CD4-positive, alpha-beta memory T cell (primary cell): ENCODE measurements at regions of chr12 and their contacts with region 1.

Region 1: DNA sequence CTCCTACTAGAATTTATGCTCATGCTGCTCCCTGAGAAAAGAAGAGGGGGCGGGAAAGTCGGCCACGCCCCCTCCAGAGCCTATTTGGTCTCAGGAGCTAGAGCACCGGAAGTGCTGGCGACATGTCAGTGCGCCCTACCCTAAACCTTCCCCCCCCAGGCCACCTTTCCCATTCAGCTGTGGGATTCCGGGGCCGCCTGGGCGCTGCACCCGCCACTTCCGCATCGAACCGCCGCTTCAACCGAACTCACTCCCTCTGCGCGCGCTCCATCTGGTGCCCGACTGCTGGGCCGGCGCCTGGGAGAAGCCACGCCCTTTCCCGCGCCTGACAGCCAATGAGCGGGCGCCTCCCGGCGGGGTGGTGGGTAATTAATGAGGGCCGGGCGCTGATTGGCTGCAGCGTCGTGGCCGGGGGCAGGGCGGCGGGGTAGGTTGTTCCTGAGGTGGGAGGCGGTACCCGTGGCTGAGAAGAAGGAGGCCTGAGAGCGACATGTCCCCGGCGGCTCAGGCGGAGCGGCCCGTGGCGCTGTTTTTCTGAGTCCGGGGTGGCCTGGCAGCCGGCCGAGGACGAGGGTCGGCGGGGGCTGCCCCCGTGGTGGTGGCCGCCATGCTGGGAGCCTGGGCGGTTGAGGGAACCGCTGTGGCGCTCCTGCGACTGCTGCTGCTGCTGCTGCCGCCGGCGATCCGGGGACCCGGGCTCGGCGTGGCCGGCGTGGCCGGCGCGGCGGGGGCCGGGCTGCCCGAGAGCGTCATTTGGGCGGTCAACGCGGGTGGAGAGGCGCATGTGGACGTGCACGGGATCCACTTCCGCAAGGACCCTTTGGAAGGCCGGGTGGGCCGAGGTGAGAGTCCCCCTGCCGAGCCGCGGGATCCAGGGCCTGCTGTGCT is at the start of gene MLEC:
- DNase-seq: peak; percentile 99 to 100 (median 100)
- H3K4me3 ChIP-seq: peak within 1 kb of the TSS; percentile 85 to 98
- H3K4me3 Mint-ChIP-seq: peak within 1 kb of the TSS; percentile 90 to 96 (median 94)
- H3K27ac ChIP-seq: peak within 1 kb of the TSS; percentile 71
- H3K27ac Mint-ChIP-seq: peak within 1 kb of the TSS; percentile 92 to 97 (median 96)
- H3K4me1 ChIP-seq: peaks cover 41% of the 10 kb centered on the region
- H3K4me1 Mint-ChIP-seq: peaks cover 20 to 52% (median 36%) of the 10 kb centered on the region in 4 donors
- H3K27me3 ChIP-seq: no peaks in the 10 kb centered on the region
- H3K27me3 Mint-ChIP-seq: no peaks in the 10 kb centered on the region
- total RNA-seq, gene MLEC: 75.1 to 88.9 TPM

Region 2: GRCh38 chr12:119667577-119668323 is 1019.2 kb before region 1 on chr12 and contains the start of gene PRKAB1:
- CTCF ChIA-PET with region 1: no interaction called
- POLR2A ChIA-PET with region 1: no interaction called
- intact Hi-C with region 1: loop called (anchors 10 kb)
- DNase-seq: peak; percentile 94 to 97 (median 96)
- H3K4me3 ChIP-seq: peak within 1 kb of the TSS; percentile 67 to 98
- H3K4me3 Mint-ChIP-seq: peak within 1 kb of the TSS; percentile 88 to 93 (median 90)
- H3K27ac ChIP-seq: peak within 1 kb of the TSS; percentile 78
- H3K27ac Mint-ChIP-seq: peak within 1 kb of the TSS; percentile 88 to 95 (median 93)
- H3K4me1 ChIP-seq: peaks cover 53% of the 10 kb centered on the region
- H3K4me1 Mint-ChIP-seq: peaks cover 30 to 67% (median 47%) of the 10 kb centered on the region in 4 donors
- H3K27me3 ChIP-seq: no peaks in the 10 kb centered on the region
- H3K27me3 Mint-ChIP-seq: no peaks in the 10 kb centered on the region
- total RNA-seq, gene PRKAB1: 43.4 to 47.6 TPM

Region 3: GRCh38 chr12:120437754-120438494 is 249.0 kb before region 1 on chr12 and contains the start of gene COX6A1:
- CTCF ChIA-PET with region 1: no interaction called
- POLR2A ChIA-PET with region 1: interaction called, 6 read pairs
- intact Hi-C with region 1: loop called (anchors 1 kb)
- DNase-seq: peak; percentile 94 to 99 (median 98)
- H3K4me3 ChIP-seq: peak within 1 kb of the TSS; percentile 52 to 70
- H3K4me3 Mint-ChIP-seq: peak within 1 kb of the TSS; percentile 92 to 99 (median 96)
- H3K27ac ChIP-seq: peak within 1 kb of the TSS; percentile 76
- H3K27ac Mint-ChIP-seq: peak within 1 kb of the TSS; percentile 86 to 99 (median 96)
- H3K4me1 ChIP-seq: peaks cover 26% of the 10 kb centered on the region
- H3K4me1 Mint-ChIP-seq: peaks cover 18 to 31% (median 27%) of the 10 kb centered on the region in 4 donors
- H3K27me3 ChIP-seq: no peaks in the 10 kb centered on the region
- H3K27me3 Mint-ChIP-seq: peaks cover under 1 to 3% of the 10 kb centered on the region in 2 donors
- total RNA-seq, gene COX6A1: 144 to 158 TPM

Region 4: GRCh38 chr12:120580787-120581723 is 105.9 kb before region 1 on chr12 and contains the start of gene POP5:
- CTCF ChIA-PET with region 1: interaction called, 3 read pairs
- POLR2A ChIA-PET with region 1: interaction called, 9 read pairs
- intact Hi-C with region 1: loop called (anchors 1 kb)
- DNase-seq: peak; percentile 90 to 96 (median 91)
- H3K4me3 ChIP-seq: peak within 1 kb of the TSS; percentile 90 to 94
- H3K4me3 Mint-ChIP-seq: peak within 1 kb of the TSS; percentile 96 to 99 (median 98)
- H3K27ac ChIP-seq: peak within 1 kb of the TSS; percentile 72
- H3K27ac Mint-ChIP-seq: peak within 1 kb of the TSS; percentile 92 to 98 (median 96)
- H3K4me1 ChIP-seq: peaks cover 34% of the 10 kb centered on the region
- H3K4me1 Mint-ChIP-seq: peaks cover 17 to 43% (median 37%) of the 10 kb centered on the region in 4 donors
- H3K27me3 ChIP-seq: no peaks in the 10 kb centered on the region
- H3K27me3 Mint-ChIP-seq: no peaks in the 10 kb centered on the region
- total RNA-seq, gene POP5: 70.4 to 70.7 TPM

Region 5: GRCh38 chr12:120725659-120726509 is 39.0 kb after region 1 on chr12 and contains the start of gene ACADS:
- CTCF ChIA-PET with region 1: interaction called, 3 read pairs
- POLR2A ChIA-PET with region 1: no interaction called
- intact Hi-C with region 1: loop called (anchors 1 kb)
- DNase-seq: peak; percentile 84 to 87 (median 86)
- H3K4me3 ChIP-seq: peak within 1 kb of the TSS; percentile 20 to 71
- H3K4me3 Mint-ChIP-seq: peak within 1 kb of the TSS; percentile 90 to 95 (median 91)
- H3K27ac ChIP-seq: peak within 1 kb of the TSS; percentile 56
- H3K27ac Mint-ChIP-seq: peak within 1 kb of the TSS; percentile 72 to 94 (median 90)
- H3K4me1 ChIP-seq: peaks cover 16% of the 10 kb centered on the region
- H3K4me1 Mint-ChIP-seq: peaks cover 13 to 30% (median 20%) of the 10 kb centered on the region in 4 donors
- H3K27me3 ChIP-seq: no peaks in the 10 kb centered on the region
- H3K27me3 Mint-ChIP-seq: no peaks in the 10 kb centered on the region
- total RNA-seq, gene ACADS: 14.9 to 17.1 TPM

Region 6: GRCh38 chr12:121015825-121016766 is 329.2 kb after region 1 on chr12 and contains the start of gene C12orf43:
- CTCF ChIA-PET with region 1: no interaction called
- POLR2A ChIA-PET with region 1: no interaction called
- intact Hi-C with region 1: loop called (anchors 1 kb)
- DNase-seq: peak; percentile 87 to 94 (median 89)
- H3K4me3 ChIP-seq: peak within 1 kb of the TSS; percentile 90 to 91
- H3K4me3 Mint-ChIP-seq: peak within 1 kb of the TSS; percentile 90 to 100 (median 96)
- H3K27ac ChIP-seq: peak within 1 kb of the TSS; percentile 71
- H3K27ac Mint-ChIP-seq: peak within 1 kb of the TSS; percentile 78 to 99 (median 97)
- H3K4me1 ChIP-seq: peaks cover 15% of the 10 kb centered on the region
- H3K4me1 Mint-ChIP-seq: peaks cover 17 to 29% (median 23%) of the 10 kb centered on the region in 4 donors
- H3K27me3 ChIP-seq: no peaks in the 10 kb centered on the region
- H3K27me3 Mint-ChIP-seq: no peaks in the 10 kb centered on the region
- total RNA-seq, gene C12orf43: 13.8 to 15.4 TPM